ENCODE measurements at regions of chrX and their contacts with region 1.

Region 1: DNA sequence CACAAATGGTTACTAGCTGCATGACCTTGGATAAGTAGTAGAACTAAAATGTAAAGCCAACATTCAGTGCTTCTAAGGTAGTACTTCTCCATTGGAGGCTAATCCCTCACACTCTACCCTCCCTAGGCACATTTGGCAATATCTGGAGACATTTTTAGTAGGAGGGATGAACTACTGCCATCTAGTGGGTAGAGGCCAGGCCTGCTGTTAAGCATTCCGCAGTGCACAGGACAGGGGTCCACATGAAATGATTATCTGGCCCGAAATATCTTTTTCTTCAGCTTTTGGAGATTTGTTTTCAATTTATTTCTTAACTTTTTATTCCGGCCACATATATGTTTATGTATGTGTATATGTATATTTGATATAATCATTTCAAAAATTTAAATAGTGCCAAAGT is 36.0 kb upstream of the SPANXC start:
- DNase-seq: peak; percentile 6 to 39 (median 19)
- H3K4me3 ChIP-seq: no peak overlapping the region
- H3K27ac ChIP-seq: no peak overlapping the region
- H3K4me1 ChIP-seq: no peaks in the 10 kb centered on the region
- H3K27me3 ChIP-seq: no peaks in the 10 kb centered on the region

Region 2: DNA sequence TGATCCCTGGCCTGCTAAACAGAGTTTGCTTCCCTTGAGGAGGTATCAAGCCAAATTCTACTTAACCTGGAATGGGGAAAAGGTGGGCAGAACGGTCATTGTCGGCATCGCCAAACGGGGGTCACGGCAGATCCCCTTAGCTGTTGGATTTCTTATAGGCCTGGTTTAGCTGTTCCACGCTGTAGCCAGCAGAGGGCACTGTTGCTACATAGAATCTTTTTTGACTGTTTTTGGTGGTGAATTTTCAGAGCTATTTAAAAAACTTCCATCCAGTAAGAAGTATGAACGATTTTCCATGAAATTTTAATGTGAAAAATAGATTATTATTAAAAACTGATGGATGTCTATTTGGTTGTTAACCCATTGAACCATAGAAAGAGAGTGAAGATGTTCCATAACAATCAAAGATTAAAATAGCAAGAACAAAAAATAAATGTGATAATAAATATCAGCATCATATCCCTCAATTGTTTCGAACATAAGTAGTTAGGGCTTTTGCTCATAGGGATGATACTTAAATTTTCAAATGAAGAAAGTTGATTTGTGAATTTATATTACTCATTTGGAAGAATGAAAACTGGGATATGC is 512.2 kb before region 1 on chrX:
- CTCF ChIA-PET with region 1: interaction called, 30 read pairs
- POLR2A ChIA-PET with region 1: no interaction called
- DNase-seq: peak; percentile 46 to 79 (median 68)
- H3K4me3 ChIP-seq: peak overlapping the region in 1 of 7 experiments; percentile 10
- H3K27ac ChIP-seq: no peak overlapping the region
- H3K4me1 ChIP-seq: peaks cover 0 to 14% (median 4%) of the 10 kb centered on the region in 4 experiments
- H3K27me3 ChIP-seq: peaks cover 0 to 33% (median 18%) of the 10 kb centered on the region in 5 experiments

Region 3: GRCh38 chrX:141220344-141221035 is 57.8 kb before region 1 on chrX:
- CTCF ChIA-PET with region 1: no interaction called
- POLR2A ChIA-PET with region 1: no interaction called
- DNase-seq: peak in 1 of 3 donors; percentile 0
- H3K4me3 ChIP-seq: no peak overlapping the region
- H3K27ac ChIP-seq: no peak overlapping the region
- H3K4me1 ChIP-seq: no peaks in the 10 kb centered on the region
- H3K27me3 ChIP-seq: no peaks in the 10 kb centered on the region

Measured in common myeloid progenitor, CD34-positive (primary cell).